Right lobe of liver (tissue), 6 donors: ENCODE measurements at regions of chr1 and their contacts with region 1.

Region 1: GRCh38 chr1:28091043-28091781 is 2.8 kb upstream of the EYA3 start:
- DNase-seq: peak; percentile 60 to 80 (median 65)
- ATAC-seq: peak; percentile 46 to 54 (median 52)
- H3K4me3 ChIP-seq: no peak overlapping the region
- H3K27ac ChIP-seq: no peak overlapping the region
- H3K4me1 ChIP-seq: peaks cover 0 to 17% (median 7%) of the 10 kb centered on the region in 4 donors
- H3K27me3 ChIP-seq: no peaks in the 10 kb centered on the region
- CTCF ChIP-seq: peak; percentile 78 to 91 (median 90)
- POLR2A ChIP-seq: no peak

Region 2: DNA sequence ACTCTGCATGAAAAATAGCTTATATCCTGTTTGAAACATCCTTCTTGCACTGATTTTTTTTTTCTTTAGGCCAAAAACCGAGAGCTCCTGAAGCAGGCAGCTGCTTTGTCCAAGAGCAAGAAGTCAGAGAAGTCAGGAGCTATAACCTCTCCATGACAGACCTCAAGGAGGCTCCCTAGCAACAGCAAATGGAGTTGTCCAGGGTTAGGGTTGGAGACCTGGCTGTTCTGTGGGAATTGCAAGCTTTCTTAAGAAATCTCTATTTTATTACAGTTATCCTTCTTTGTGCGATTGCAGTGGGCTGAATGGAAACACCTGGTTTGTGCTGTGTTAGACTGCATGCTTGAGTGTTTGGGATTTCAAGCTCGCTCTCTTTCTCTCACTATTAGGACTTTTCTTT is 330.8 kb before region 1 on chr1:
- intact Hi-C with region 1: no loop called
- DNase-seq: no peak
- ATAC-seq: peak in 2 of 4 donors; percentile 34
- H3K4me3 ChIP-seq: no peak overlapping the region
- H3K27ac ChIP-seq: no peak overlapping the region
- H3K4me1 ChIP-seq: peaks cover 0 to 6% (median 0%) of the 10 kb centered on the region in 4 donors
- H3K27me3 ChIP-seq: no peaks in the 10 kb centered on the region
- CTCF ChIP-seq: no peak
- POLR2A ChIP-seq: no peak

Region 3: DNA sequence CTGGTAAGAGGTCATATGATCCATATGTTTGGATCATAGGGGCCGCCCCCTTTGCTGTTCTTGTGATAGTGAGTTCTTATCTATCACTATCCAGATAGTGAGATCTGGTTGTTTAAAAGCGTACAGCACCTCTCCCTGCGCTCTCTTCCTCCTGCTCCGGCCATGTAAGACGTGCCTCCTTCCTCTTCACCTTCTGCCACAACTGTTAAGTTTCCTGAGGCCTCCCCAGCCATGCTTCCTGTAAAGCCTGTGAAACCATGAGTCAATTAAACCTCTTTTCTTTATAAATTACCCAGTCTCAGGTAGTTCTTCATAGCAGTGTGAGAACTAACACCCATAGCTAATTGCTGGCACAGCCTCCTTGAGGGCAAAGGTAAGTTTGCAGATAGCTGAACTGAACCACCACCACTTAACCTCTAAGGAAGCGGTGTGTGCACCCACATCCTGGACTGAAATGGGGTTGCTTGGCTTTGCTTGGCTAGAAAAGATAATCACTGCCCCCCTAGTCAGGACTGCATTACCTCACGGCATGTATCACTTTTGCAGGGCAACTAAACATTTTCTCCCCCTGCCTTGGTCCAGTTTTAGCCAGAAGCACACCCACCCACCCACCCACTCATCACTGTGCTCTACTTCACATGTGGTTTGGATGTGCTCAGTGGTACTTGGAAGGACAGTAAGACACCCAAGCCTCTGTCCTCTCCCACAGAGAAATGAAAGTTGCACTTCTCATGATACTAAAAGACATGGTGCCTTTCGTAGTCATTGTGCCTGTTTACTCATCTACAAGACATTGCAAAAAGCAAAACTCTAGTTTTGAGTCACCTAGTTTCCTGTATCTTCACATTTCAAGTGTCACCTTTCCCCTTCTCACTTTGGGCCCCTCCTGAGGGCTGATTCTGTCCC is 108.4 kb after region 1 on chr1:
- intact Hi-C with region 1: loop called (anchors 10 kb)
- DNase-seq: peak in 1 of 3 donors; percentile 38
- ATAC-seq: peak; percentile 31 to 60 (median 50)
- H3K4me3 ChIP-seq: no peak overlapping the region
- H3K27ac ChIP-seq: no peak overlapping the region
- H3K4me1 ChIP-seq: peaks cover 0 to 22% (median under 1%) of the 10 kb centered on the region in 4 donors
- H3K27me3 ChIP-seq: no peaks in the 10 kb centered on the region
- CTCF ChIP-seq: no peak
- POLR2A ChIP-seq: no peak

Region 4: DNA sequence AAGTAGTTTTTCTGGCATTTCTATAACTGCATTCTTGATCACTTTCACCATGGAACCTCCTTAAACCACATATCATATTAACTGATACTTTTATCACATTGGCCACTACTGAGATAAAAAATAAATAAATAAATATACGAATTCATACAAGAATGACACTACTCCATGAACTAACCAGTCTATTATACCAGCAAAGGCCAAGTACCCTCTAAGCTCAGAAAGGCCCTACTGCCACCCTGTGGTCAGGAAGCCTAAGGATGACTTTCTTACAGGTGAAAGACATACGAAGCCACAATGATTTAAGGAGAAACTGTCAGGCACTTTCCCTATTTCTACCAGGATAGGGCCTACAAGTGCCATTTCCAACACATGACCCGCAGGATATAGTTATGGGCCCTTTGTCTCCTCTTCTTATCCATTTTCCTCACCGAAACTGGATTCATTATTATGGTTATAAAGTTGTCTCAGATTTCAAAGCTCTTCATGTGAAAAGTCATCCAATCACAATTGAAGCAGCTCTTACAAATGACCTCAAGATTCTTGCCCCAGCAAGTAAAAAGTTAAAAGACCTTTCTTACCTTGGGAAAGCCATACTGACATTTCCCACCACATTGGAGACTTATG is 117.7 kb after region 1 on chr1:
- intact Hi-C with region 1: loop called in 1 of 2 experiments (anchors 10 kb)
- DNase-seq: peak in 1 of 3 donors; percentile 40
- ATAC-seq: peak; percentile 82 to 92 (median 88)
- H3K4me3 ChIP-seq: no peak overlapping the region
- H3K27ac ChIP-seq: no peak overlapping the region
- H3K4me1 ChIP-seq: peaks cover 0 to 17% (median 8%) of the 10 kb centered on the region in 4 donors
- H3K27me3 ChIP-seq: no peaks in the 10 kb centered on the region
- CTCF ChIP-seq: peak; percentile 55 to 83 (median 74)
- POLR2A ChIP-seq: no peak